CD8-positive, alpha-beta memory T cell (primary cell): ENCODE measurements at regions of chr6 and their contacts with region 1.

Region 1: GRCh38 chr6:2891768-2892170 is 11.3 kb downstream of the SERPINB9 start:
- DNase-seq: peak; percentile 65 to 83 (median 79)
- H3K4me3 ChIP-seq: peak overlapping the region; percentile 3
- H3K4me3 Mint-ChIP-seq: peak overlapping the region; percentile 39 to 85 (median 77)
- H3K27ac ChIP-seq: peak overlapping the region; percentile 25
- H3K27ac Mint-ChIP-seq: peak overlapping the region; percentile 68 to 99 (median 96)
- H3K4me1 ChIP-seq: peaks cover 46% of the 10 kb centered on the region
- H3K4me1 Mint-ChIP-seq: peaks cover 51 to 72% (median 68%) of the 10 kb centered on the region in 3 donors
- H3K27me3 ChIP-seq: no peaks in the 10 kb centered on the region
- H3K27me3 Mint-ChIP-seq: peaks cover 0 to 2% of the 10 kb centered on the region in 2 donors

Region 2: GRCh38 chr6:2658788-2659187 is 233.0 kb before region 1 on chr6:
- CTCF ChIA-PET with region 1: no interaction called
- POLR2A ChIA-PET with region 1: no interaction called
- DNase-seq: no peak
- H3K4me3 ChIP-seq: no peak overlapping the region
- H3K4me3 Mint-ChIP-seq: no peak overlapping the region
- H3K27ac ChIP-seq: no peak overlapping the region
- H3K27ac Mint-ChIP-seq: no peak overlapping the region
- H3K4me1 ChIP-seq: no peaks in the 10 kb centered on the region
- H3K4me1 Mint-ChIP-seq: no peaks in the 10 kb centered on the region
- H3K27me3 ChIP-seq: no peaks in the 10 kb centered on the region
- H3K27me3 Mint-ChIP-seq: peaks cover 2 to 7% of the 10 kb centered on the region in 2 donors

Region 3: GRCh38 chr6:2848851-2849250 is 42.9 kb before region 1 on chr6:
- CTCF ChIA-PET with region 1: interaction called, 11 read pairs
- POLR2A ChIA-PET with region 1: interaction called, 8 read pairs
- DNase-seq: peak; percentile 19 to 77 (median 55)
- H3K4me3 ChIP-seq: no peak overlapping the region
- H3K4me3 Mint-ChIP-seq: peak overlapping the region in 5 of 7 donors; percentile 4 to 62 (median 30)
- H3K27ac ChIP-seq: no peak overlapping the region
- H3K27ac Mint-ChIP-seq: peak overlapping the region in 7 of 8 donors; percentile 1 to 94 (median 89)
- H3K4me1 ChIP-seq: peaks cover 31% of the 10 kb centered on the region
- H3K4me1 Mint-ChIP-seq: peaks cover 32 to 44% (median 34%) of the 10 kb centered on the region in 3 donors
- H3K27me3 ChIP-seq: no peaks in the 10 kb centered on the region
- H3K27me3 Mint-ChIP-seq: no peaks in the 10 kb centered on the region

Region 4: DNA sequence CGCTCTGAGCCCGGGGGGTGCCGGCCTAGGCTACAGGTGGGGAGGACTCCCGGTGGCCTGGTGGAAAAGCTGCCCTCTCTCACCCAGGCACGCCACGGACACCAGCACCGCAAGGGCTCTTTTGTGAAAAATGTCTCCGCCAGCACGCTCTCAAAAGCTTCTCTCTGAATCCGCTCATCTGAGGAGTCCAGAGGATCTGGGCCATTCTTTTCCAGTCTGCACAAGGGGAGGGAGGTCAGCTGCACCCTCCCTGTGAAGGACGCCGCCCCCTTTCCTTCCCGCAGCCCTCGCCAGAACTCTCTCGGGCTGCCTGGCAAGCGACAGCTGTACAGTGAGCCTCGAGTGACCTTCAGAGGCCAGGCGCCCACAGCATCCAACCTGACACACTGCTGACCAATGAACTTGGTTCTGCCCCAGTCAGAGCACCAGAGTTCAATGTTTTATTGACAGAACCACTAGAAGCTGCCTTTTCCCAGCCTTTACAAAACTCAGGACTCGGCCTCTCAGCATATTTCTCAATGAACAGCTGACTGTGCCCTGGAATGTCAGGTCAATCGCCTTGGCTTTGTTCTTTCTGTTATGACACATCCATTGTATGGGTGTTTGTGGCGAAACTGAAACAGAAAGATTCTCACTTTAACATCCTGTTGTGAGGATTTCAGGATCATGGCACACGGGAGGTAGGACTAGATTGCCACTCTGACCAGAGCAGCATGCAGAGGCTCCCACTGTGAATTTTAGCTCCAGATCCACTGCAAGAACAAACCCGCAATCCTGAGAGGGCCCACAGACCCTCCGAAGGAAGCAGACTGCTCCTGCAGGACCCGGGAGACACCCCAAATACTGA is 15.3 kb before region 1 on chr6:
- CTCF ChIA-PET with region 1: interaction called, 5 read pairs
- POLR2A ChIA-PET with region 1: interaction called, 13 read pairs
- DNase-seq: peak in 1 of 5 donors; percentile 25
- H3K4me3 ChIP-seq: peak overlapping the region; percentile 34
- H3K4me3 Mint-ChIP-seq: peak overlapping the region; percentile 74 to 95 (median 85)
- H3K27ac ChIP-seq: no peak overlapping the region
- H3K27ac Mint-ChIP-seq: peak overlapping the region; percentile 88 to 98 (median 95)
- H3K4me1 ChIP-seq: peaks cover 64% of the 10 kb centered on the region
- H3K4me1 Mint-ChIP-seq: peaks cover 71 to 85% (median 83%) of the 10 kb centered on the region in 3 donors
- H3K27me3 ChIP-seq: no peaks in the 10 kb centered on the region
- H3K27me3 Mint-ChIP-seq: no peaks in the 10 kb centered on the region

Region 5: GRCh38 chr6:2918936-2919335 is 27.2 kb after region 1 on chr6:
- CTCF ChIA-PET with region 1: no interaction called
- POLR2A ChIA-PET with region 1: no interaction called
- DNase-seq: no peak
- H3K4me3 ChIP-seq: no peak overlapping the region
- H3K4me3 Mint-ChIP-seq: peak overlapping the region in 1 of 7 donors; percentile 10
- H3K27ac ChIP-seq: no peak overlapping the region
- H3K27ac Mint-ChIP-seq: peak overlapping the region in 3 of 8 donors; percentile 3 to 68 (median 60)
- H3K4me1 ChIP-seq: peaks cover 8% of the 10 kb centered on the region
- H3K4me1 Mint-ChIP-seq: peaks cover 19 to 31% (median 31%) of the 10 kb centered on the region in 3 donors
- H3K27me3 ChIP-seq: no peaks in the 10 kb centered on the region
- H3K27me3 Mint-ChIP-seq: no peaks in the 10 kb centered on the region

Region 6: DNA sequence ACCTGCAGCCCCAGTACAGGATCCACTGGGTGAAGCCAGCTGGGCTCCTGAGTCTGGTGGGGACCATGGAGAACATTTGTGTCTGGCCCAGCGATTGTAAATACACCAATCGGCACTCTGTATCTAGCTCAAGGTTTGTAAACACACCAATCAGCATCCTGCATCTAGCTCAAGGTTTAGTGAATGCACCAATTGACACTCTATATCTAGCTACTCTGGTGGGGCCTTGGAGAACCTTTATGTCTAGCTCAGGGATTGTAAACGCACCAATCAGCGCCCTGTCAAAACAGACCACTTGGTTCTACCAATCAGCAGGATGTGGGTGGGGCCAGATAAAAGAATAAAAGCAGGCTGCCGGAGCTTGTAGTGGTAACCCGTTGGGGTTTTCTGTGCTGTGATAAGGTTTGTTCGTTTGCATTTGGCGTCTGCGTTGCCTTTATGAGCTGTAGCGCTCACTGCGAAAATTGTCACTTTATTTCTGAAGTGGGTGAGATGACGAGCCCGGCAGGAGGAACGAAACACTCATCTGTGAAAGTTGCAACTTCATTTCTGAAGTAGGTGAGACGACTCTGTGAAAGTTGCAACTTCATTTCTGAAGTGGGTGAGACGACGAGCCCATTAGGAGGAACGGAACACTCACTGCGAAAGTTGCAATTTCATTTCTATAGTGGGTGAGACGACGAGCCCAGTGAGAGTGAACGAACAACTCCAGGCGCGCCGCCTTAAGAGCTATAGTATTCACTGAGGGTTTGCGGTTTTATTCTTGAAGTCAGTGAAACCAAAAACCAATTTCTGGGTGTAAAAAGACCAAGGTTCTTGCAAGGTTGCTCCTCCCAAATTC is 48.5 kb after region 1 on chr6:
- CTCF ChIA-PET with region 1: no interaction called
- POLR2A ChIA-PET with region 1: interaction called, 23 read pairs
- DNase-seq: peak; percentile 46 to 86 (median 78)
- H3K4me3 ChIP-seq: peak overlapping the region; percentile 85
- H3K4me3 Mint-ChIP-seq: peak overlapping the region; percentile 71 to 92 (median 89)
- H3K27ac ChIP-seq: peak overlapping the region; percentile 60
- H3K27ac Mint-ChIP-seq: peak overlapping the region; percentile 90 to 99 (median 94)
- H3K4me1 ChIP-seq: peaks cover 73% of the 10 kb centered on the region
- H3K4me1 Mint-ChIP-seq: peaks cover 59 to 70% (median 61%) of the 10 kb centered on the region in 3 donors
- H3K27me3 ChIP-seq: no peaks in the 10 kb centered on the region
- H3K27me3 Mint-ChIP-seq: peaks cover 0 to 1% of the 10 kb centered on the region in 2 donors